ENCODE measurements at regions of chr15 and their contacts with region 1.

Region 1: DNA sequence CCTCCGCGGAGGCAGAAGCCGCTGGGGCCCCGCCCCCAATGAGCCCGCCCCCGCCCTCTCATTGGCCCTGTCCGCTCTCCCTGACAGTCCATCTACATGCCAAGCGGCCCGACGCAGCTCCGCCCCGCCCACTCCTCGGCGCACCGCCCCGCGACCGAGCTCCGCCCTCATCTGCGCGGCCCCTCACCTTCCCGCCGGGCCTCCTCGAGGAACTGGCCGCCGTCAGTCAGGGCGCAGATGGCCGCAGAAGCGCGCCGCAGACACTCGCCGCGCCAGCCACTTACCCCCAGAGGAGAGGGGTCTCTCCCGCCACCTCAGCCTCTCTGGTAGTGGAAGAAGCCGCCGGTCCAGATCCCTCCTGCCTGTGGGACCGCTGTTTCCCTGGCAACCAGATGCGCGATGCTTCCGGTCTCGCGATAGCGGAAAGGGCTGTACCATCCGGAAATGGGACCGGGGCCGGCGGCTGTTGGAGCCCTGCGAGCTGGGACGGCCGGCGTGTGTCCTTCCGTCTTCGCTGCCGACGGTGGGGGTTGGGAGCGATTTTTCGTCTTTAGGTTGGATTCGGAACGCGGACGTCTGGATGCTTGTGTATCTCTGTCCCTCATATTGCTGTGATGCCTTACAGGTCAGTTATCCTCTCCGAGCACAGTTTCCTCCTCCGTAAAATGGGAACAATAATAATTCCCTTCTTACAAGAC is at the start of gene FSIP1:
- DNase-seq: peak; percentile 98
- ATAC-seq: peak; percentile 98
- H3K4me3 Mint-ChIP-seq: peak within 1 kb of the TSS; percentile 98
- H3K27ac Mint-ChIP-seq: peak within 1 kb of the TSS; percentile 91
- H3K4me1 Mint-ChIP-seq: peaks cover 41% of the 10 kb centered on the region
- H3K27me3 Mint-ChIP-seq: peaks cover 4% of the 10 kb centered on the region
- CTCF ChIP-seq: no peak
- total RNA-seq, gene FSIP1: 0.32 and 0.53 TPM in 2 replicates

Region 2: DNA sequence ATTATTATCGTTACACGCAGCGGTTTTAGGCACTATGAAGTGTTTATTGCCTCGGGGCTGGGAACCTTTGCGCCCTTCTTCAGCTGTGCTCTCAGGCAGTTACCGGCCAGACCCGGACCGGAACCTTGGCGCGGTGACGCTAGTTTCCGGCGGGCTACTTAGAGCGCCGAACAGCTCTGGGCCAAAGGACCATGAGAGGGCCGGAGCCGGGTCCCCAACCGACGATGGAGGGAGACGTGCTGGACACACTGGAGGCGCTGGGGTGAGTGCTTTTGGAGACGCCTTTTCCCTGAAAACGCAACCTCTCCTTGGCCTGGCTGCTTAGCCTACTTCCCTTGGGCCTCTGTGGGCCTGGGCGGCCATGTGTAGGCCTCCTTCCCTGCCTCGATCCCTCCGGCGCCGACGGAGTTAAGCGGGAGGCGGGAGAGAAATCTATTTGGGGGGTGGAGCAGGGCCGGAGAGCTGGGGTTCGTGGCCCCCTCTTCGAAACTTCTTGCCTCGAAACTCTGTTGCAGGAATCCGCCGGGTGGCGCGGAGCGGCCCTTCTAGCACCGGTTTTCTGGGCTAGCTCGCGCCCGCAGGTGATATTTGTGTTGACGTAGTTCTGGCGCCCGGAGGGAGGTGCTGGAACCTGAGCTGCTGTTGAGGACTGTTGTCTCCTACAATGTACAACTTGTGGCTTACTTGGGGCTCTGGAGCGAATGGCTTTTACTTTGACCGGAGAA is 1328.5 kb before region 1 on chr15 and contains the start of gene FAM98B:
- CTCF ChIA-PET with region 1: no interaction called
- POLR2A ChIA-PET with region 1: no interaction called
- intact Hi-C with region 1: loop called (anchors 5 kb)
- DNase-seq: peak; percentile 92
- ATAC-seq: peak; percentile 90
- H3K4me3 Mint-ChIP-seq: peak within 1 kb of the TSS; percentile 97
- H3K27ac Mint-ChIP-seq: peak within 1 kb of the TSS; percentile 91
- H3K4me1 Mint-ChIP-seq: peaks cover 35% of the 10 kb centered on the region
- H3K27me3 Mint-ChIP-seq: peaks cover 2% of the 10 kb centered on the region
- CTCF ChIP-seq: no peak
- total RNA-seq, gene FAM98B: 29.9 and 30.7 TPM in 2 replicates

Region 3: DNA sequence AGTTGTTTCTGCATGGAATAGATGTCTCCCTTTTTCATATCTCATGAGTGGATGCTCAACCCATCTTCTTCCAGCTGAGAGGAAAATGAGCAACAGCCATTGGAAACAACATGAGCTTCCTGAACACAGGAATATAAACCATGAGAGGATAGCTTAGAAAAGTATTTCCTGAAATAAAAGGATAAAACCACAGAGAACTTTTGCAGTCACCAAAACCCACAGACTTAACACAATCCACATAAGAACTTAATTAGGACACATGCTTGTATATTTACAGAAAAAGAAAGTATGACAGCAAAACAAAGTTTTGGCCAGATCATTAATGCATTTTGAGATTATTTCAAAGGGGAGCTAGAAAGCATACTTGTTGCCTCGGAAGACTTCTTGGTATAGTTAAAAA is 1037.5 kb before region 1 on chr15:
- CTCF ChIA-PET with region 1: no interaction called
- POLR2A ChIA-PET with region 1: no interaction called
- intact Hi-C with region 1: no loop called
- DNase-seq: no peak
- ATAC-seq: no peak
- H3K4me3 Mint-ChIP-seq: no peak overlapping the region
- H3K27ac Mint-ChIP-seq: no peak overlapping the region
- H3K4me1 Mint-ChIP-seq: no peaks in the 10 kb centered on the region
- H3K27me3 Mint-ChIP-seq: peaks cover 14% of the 10 kb centered on the region
- CTCF ChIP-seq: no peak

Region 4: GRCh38 chr15:39686000-39686613 is 96.5 kb before region 1 on chr15:
- CTCF ChIA-PET with region 1: no interaction called
- POLR2A ChIA-PET with region 1: no interaction called
- intact Hi-C with region 1: no loop called
- DNase-seq: no peak
- ATAC-seq: no peak
- H3K4me3 Mint-ChIP-seq: no peak overlapping the region
- H3K27ac Mint-ChIP-seq: no peak overlapping the region
- H3K4me1 Mint-ChIP-seq: no peaks in the 10 kb centered on the region
- H3K27me3 Mint-ChIP-seq: no peaks in the 10 kb centered on the region
- CTCF ChIP-seq: no peak

Region 5: GRCh38 chr15:39920510-39921273 is 138.1 kb after region 1 on chr15:
- CTCF ChIA-PET with region 1: no interaction called
- POLR2A ChIA-PET with region 1: interaction called, 3 read pairs
- intact Hi-C with region 1: loop called (anchors 1 kb)
- DNase-seq: peak; percentile 84
- ATAC-seq: peak; percentile 90
- H3K4me3 Mint-ChIP-seq: peak overlapping the region; percentile 88
- H3K27ac Mint-ChIP-seq: peak overlapping the region; percentile 79
- H3K4me1 Mint-ChIP-seq: peaks cover 13% of the 10 kb centered on the region
- H3K27me3 Mint-ChIP-seq: peaks cover 15% of the 10 kb centered on the region
- CTCF ChIP-seq: no peak

Region 6: DNA sequence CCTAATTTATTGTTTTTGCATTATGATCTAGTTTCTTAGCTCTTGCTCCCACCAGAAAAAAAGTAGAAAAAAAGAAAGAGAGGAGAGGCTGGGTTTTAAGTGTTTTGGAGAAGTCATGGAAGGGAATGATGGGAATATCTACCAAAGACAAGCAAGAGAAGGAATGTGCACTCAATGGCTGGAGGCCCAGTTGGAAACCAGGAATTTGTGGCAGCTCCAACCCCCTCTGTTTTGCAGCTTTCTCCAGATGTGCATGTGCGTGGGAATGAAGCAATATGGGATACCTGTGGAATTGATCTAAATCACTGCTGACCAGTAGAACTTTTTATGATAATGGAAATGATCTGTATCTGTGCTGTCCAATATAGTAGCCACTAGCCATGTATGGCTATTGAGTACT is 178.5 kb after region 1 on chr15:
- CTCF ChIA-PET with region 1: no interaction called
- POLR2A ChIA-PET with region 1: no interaction called
- intact Hi-C with region 1: no loop called
- DNase-seq: no peak
- ATAC-seq: no peak
- H3K4me3 Mint-ChIP-seq: no peak overlapping the region
- H3K27ac Mint-ChIP-seq: no peak overlapping the region
- H3K4me1 Mint-ChIP-seq: no peaks in the 10 kb centered on the region
- H3K27me3 Mint-ChIP-seq: no peaks in the 10 kb centered on the region
- CTCF ChIP-seq: no peak

Region 7: GRCh38 chr15:39976291-39977274 is 194.0 kb after region 1 on chr15:
- CTCF ChIA-PET with region 1: no interaction called
- POLR2A ChIA-PET with region 1: no interaction called
- intact Hi-C with region 1: loop called (anchors 5 kb)
- DNase-seq: peak; percentile 21
- ATAC-seq: peak; percentile 65
- H3K4me3 Mint-ChIP-seq: peak overlapping the region; percentile 74
- H3K27ac Mint-ChIP-seq: no peak overlapping the region
- H3K4me1 Mint-ChIP-seq: no peaks in the 10 kb centered on the region
- H3K27me3 Mint-ChIP-seq: no peaks in the 10 kb centered on the region
- CTCF ChIP-seq: no peak

Region 8: DNA sequence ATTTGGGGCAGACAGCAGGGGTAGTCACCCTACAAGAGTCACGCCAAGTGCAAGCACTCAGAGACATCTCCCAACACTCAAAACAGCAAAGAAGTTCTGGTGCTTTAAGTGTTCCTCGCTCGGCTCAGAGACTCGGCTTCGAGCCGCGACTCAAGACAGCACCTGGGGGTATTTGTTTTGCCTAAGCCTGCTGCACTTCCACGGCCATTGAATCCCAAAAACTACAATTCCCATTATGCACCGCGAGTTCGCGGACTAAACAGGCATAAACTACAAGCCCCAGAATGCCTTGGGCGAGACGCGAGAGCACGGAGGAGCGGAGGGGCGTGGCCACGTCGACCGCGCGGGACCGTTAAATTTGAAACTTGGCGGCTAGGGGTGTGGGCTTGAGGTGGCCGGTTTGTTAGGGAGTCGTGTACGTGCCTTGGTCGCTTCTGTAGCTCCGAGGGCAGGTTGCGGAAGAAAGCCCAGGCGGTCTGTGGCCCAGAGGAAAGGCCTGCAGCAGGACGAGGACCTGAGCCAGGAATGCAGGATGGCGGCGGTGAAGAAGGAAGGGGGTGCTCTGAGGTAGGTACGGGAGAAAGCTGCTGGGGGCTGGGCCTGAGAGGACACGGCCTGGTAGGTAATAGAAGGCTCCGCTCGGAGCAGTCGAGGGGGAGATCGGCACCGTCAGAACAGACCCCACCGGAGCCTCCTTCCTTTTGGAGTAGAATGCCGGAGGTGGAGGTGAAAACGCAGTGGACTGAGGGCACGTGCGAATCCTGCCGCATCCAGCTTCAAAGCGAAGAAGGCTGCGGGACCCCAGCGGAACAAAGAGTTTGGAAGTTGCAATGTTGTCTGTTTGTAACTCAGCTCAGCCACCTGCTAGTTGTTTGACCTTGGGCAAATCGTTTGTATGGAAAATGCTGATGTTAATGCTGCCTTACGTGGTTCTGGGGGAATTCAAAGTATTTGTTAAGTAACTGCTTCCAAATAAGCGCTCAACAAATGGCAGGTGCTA is 378.4 kb after region 1 on chr15 and contains the start of gene BUB1B:
- CTCF ChIA-PET with region 1: no interaction called
- POLR2A ChIA-PET with region 1: no interaction called
- intact Hi-C with region 1: loop called (anchors 2 kb)
- DNase-seq: peak; percentile 88
- ATAC-seq: peak; percentile 97
- H3K4me3 Mint-ChIP-seq: no peak within 1 kb of the TSS
- H3K27ac Mint-ChIP-seq: no peak within 1 kb of the TSS
- H3K4me1 Mint-ChIP-seq: peaks cover 10% of the 10 kb centered on the region
- H3K27me3 Mint-ChIP-seq: no peaks in the 10 kb centered on the region
- CTCF ChIP-seq: no peak
- total RNA-seq, gene BUB1B: 3.9 and 4.2 TPM in 2 replicates

Region 9: GRCh38 chr15:40323239-40323952 is 540.8 kb after region 1 on chr15 and contains the start of gene INAFM2:
- CTCF ChIA-PET with region 1: no interaction called
- POLR2A ChIA-PET with region 1: interaction called, 5 read pairs
- intact Hi-C with region 1: loop called (anchors 1 kb)
- DNase-seq: peak; percentile 88
- ATAC-seq: peak; percentile 92
- H3K4me3 Mint-ChIP-seq: peak within 1 kb of the TSS; percentile 80
- H3K27ac Mint-ChIP-seq: peak within 1 kb of the TSS; percentile 65
- H3K4me1 Mint-ChIP-seq: peaks cover 29% of the 10 kb centered on the region
- H3K27me3 Mint-ChIP-seq: no peaks in the 10 kb centered on the region
- CTCF ChIP-seq: no peak
- total RNA-seq, gene INAFM2: 9.5 TPM in 2 replicates

Region 10: DNA sequence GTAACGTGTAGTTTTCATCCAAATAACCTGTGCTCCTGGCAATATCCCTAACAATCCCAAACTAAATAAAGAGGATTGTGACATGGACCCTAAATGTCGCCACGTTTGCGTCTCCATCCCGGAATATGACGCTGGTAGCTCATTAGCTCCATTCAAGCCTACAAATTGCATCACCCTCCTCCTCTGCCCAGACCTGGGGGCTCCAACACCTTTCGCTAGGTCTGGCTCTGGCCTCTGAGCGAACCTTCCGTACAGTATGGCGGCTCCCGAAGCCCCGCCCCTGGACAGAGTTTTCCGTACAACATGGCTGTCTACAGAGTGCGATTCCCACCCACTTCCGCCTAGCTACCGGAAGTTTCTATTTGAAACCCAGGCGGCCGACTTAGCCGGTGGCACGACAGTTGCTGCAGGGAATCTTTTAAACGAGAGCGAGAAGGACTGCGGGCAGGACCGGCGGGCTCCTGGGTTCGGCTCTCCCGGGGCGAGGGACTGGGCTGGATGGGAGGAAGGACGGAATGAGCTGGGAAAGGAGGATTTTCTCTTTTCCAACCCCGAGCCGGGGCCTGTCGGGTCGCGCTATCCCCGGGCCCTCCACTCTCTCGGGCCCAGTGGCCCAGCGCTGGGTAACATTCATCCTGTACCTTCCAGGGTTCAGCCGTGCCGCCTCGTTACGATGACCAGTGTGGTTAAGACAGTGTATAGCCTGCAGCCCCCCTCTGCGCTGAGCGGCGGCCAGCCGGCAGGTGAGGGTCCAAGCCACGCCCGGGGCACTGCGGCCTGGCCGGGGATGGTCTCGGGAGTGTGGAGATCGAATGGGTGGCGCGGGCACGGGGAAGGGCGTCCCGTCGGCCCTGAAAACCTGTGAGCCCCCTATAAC is 600.2 kb after region 1 on chr15 and contains the start of gene KNSTRN:
- CTCF ChIA-PET with region 1: no interaction called
- POLR2A ChIA-PET with region 1: no interaction called
- intact Hi-C with region 1: loop called (anchors 5 kb)
- DNase-seq: peak; percentile 83
- ATAC-seq: peak; percentile 99
- H3K4me3 Mint-ChIP-seq: peak within 1 kb of the TSS; percentile 96
- H3K27ac Mint-ChIP-seq: peak within 1 kb of the TSS; percentile 73
- H3K4me1 Mint-ChIP-seq: peaks cover 12% of the 10 kb centered on the region
- H3K27me3 Mint-ChIP-seq: no peaks in the 10 kb centered on the region
- CTCF ChIP-seq: no peak
- total RNA-seq, gene KNSTRN: 11.5 and 13.4 TPM in 2 replicates

Measured in activated B cell treated with CpG ODN at 0.5 μM for 24 hours (primary cell).